ENCODE measurements at regions of chr3 and their contacts with region 1.

Region 1: DNA sequence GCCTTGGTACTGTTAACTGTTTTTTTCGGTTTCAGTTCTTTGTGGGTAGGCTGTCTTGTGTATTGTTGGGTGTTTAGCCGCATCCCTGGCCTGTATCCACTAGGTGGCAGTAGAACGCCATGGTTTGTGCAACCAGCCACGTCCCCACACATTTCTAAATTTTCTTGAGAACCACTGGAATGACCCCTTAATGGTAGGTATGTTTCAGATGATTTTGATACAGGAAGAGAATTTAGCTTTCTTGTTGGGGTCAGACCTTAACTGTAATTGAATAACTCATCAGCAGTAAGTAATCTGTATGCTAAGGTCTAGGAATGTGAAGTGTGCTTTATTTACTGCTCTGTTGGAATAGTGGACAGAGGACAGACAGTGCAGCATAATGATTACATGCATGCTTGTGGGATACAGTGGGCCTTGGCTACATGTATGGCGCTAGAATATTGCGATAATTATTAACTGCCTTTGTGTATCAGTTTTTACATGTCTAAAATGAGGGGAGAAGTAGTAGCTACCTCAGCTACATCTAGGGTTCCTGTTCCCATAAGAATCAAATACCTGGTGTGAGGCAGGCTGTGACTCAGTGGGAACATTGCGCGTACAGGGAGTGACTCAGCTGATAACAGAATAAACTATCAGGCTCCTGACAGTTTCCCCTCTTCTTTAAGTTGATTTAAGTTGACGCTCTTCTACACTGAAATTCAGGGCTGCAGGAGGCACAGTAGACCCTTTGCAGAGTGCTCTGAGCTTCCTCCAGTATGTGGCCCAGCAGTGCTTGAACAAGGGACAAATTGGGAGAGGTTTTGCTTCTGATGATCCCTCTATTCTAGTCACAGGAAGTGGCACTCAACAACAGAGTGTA is 25.0 kb upstream of the GPR171 start:
- DNase-seq: peak; percentile 72 to 92
- H3K4me3 ChIP-seq: no peak overlapping the region
- CTCF ChIP-seq: peak in 2 of 3 donors; percentile 16 to 78
- POLR2A ChIP-seq: no peak

Region 2: GRCh38 chr3:151171145-151171757 is 56.8 kb before region 1 on chr3:
- intact Hi-C with region 1: loop called (anchors 10 kb)
- DNase-seq: peak in 1 of 2 donors; percentile 21
- H3K4me3 ChIP-seq: no peak overlapping the region
- CTCF ChIP-seq: no peak
- POLR2A ChIP-seq: no peak

Region 3: GRCh38 chr3:151248772-151249337 is 20.8 kb after region 1 on chr3:
- intact Hi-C with region 1: no loop called
- DNase-seq: no peak
- H3K4me3 ChIP-seq: no peak overlapping the region
- CTCF ChIP-seq: no peak
- POLR2A ChIP-seq: no peak

Region 4: DNA sequence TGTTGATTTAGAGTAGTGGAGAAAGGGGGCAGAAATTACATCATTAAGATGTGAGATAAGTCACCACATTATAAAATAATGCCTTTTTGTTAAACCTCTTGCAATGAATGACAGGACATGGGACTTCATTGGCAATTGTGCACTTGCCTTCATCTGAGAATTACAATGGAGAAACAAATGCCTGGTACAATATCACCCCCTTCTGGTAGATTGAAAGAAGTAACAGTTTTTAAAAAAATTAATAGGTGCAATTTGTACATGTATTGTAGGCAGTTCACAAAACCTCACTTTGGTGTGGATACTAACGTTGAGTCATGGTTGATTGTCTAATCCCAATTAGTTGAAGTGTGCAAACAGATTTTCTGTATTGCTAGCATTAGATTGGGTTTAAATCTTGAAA is 54.9 kb after region 1 on chr3:
- intact Hi-C with region 1: loop called (anchors 10 kb)
- DNase-seq: no peak
- H3K4me3 ChIP-seq: no peak overlapping the region
- CTCF ChIP-seq: peak in 1 of 3 donors; percentile 10
- POLR2A ChIP-seq: no peak

Measured in lower leg skin (tissue), 4 donors.